ENCODE measurements at regions of chr9 and their contacts with region 1.

Region 1: DNA sequence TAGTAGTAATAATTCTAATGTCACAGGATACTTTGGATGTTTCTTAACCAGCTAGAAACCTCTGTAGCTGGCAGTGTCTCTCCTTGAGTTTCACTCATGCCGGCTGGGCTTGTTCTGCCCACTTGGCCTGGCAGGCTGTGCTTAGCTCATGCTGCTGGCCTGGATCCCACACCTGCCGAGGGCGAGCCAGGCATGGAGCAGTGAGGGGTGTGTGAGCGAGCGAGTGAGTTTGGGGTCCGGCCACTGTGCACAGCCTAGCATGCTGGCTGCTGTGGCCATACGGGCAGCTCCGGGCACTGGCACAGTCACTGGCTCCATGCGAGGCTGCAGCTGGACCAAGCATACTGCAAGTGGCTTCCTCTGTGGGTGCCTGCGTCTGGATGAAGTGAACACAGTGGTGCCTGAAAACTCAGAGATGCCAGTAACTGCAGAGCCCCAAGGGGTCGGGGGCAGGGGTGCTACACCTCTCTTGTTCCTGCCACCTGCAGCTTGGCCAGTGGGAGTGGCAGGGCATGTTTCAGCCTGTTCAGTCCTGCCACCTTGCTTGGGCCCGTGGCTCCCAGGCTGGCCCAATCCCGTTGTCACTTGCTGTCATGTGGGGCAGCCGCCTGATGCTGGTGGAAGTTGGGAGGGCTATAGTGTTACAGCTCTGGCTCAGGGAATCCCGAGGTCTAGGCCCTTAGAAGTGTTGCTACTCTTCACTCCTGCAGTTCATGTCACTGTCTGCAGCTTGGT is 9.9 kb downstream of the FSD1L start:
- DNase-seq: no peak
- ATAC-seq: no peak
- H3K4me3 ChIP-seq: no peak overlapping the region
- H3K27ac ChIP-seq: no peak overlapping the region
- H3K4me1 ChIP-seq: peaks cover 4% of the 10 kb centered on the region
- H3K27me3 ChIP-seq: no peaks in the 10 kb centered on the region
- CTCF ChIP-seq: no peak
- POLR2A ChIP-seq: no peak
- RAD21 ChIP-seq: no peak

Region 2: GRCh38 chr9:106648799-106649198 is 1191.1 kb after region 1 on chr9:
- CTCF ChIA-PET with region 1: no interaction called
- POLR2A ChIA-PET with region 1: no interaction called
- dilution Hi-C with region 1: no loop called
- in situ Hi-C with region 1: no loop called
- intact Hi-C with region 1: loop called (anchors 5 kb)
- DNase-seq: peak; percentile 13
- ATAC-seq: no peak
- H3K4me3 ChIP-seq: no peak overlapping the region
- H3K27ac ChIP-seq: no peak overlapping the region
- H3K4me1 ChIP-seq: no peaks in the 10 kb centered on the region
- H3K27me3 ChIP-seq: no peaks in the 10 kb centered on the region
- CTCF ChIP-seq: peak; percentile 36
- POLR2A ChIP-seq: no peak
- RAD21 ChIP-seq: peak; percentile 36